ENCODE measurements at regions of chr19 and their contacts with region 1.

Region 1: DNA sequence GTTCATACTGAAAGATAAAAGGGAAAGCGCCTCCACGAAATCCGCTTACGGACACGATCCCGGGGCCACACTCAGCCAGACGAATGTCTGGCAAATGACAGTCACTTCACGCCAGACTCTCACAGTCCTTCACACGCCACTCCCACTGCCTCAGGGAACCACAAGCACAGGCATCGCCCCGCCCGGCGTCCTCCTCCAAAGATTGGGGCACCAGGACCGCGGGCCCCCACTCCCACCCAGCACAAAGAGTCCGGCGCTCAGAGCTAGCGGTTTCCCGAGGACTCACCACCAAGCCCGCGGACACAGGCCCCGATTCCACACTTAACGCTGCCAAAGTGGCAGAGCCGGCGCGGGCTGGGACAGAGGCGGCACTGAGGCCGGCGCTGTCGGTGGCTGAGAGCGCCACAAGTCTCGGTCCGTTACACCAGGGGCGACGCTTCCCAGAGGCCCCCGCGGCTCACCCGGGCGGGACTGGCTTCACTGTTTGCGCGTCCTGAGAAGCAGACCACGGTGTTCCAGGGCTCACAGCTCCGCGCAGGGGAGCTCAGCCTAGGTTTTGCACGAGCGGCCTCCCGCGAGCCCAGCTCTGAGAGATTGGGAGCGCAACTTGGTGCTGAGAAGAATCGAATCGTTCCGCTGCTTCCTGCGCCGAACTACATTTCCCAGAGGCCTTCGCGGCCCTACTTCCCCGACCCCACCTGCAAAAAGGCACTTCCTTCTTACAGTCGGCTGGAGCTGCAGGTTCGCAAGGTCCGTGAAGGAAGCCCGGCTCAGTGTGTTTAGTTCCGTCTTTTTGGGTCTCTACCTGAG is at the start of gene ZNF569:
- DNase-seq: peak; percentile 90 to 93 (median 92)
- ATAC-seq: peak; percentile 82 to 88 (median 85)
- H3K4me3 ChIP-seq: peak within 1 kb of the TSS; percentile 51 to 95 (median 81)
- H3K27ac ChIP-seq: peak within 1 kb of the TSS; percentile 74 to 99 (median 96)
- H3K4me1 ChIP-seq: peaks cover 0 to 32% (median 25%) of the 10 kb centered on the region in 12 donors
- H3K27me3 ChIP-seq: no peaks in the 10 kb centered on the region
- CTCF ChIP-seq: peak in 1 of 12 donors; percentile 25
- POLR2A ChIP-seq: peak in 1 of 2 donors; percentile 46
- total RNA-seq, gene ZNF569: 5.4 to 8.0 (median 6.1) TPM

Region 2: DNA sequence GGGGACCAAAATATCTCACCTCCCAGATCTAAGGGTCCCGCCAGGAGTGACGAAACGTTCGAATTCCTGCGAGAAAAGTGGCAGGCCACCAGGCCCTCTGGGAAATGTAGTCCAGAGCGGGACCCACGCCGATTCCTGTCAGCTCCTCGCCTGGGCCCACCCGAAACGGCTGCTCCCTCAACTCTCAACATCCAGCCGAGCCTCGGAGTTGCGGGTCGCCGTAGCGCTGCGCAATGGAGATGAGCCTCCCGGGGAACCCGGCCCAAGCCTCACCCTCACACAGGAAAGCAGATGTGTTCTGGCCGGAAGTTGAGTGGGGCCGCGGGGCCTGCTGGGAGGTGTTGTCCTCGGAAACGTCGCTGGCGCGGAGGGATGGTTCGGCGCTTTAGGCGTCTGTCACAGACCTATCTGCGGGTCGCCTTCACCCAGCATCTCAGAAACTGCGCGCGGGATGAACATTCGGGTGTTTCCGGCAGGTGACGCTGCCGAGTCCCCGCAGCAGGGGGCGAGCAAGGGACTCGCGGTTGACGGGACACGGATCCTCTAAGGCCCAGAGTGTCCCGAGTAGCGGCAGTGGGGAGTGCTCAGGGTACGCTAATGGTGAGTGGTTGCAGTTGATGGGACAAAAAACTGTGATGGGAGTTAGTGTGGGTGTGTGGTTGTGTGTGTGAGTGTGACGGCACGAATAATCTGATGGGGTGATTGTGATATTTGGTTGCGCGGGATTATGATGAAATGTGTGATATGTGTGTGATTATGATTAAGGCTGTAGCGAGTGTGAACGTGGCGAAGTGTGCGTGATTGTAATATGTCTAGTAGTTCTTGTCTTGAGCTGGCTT is 550.8 kb before region 1 on chr19 and contains the starts of genes ZNF568 and ZNF829:
- intact Hi-C with region 1: loop called in 1 of 10 experiments (anchors 5 kb)
- DNase-seq: peak; percentile 91 to 95 (median 93)
- ATAC-seq: peak; percentile 94 to 99 (median 98)
- H3K4me3 ChIP-seq: peak within 1 kb of the TSS; percentile 60 to 87 (median 80)
- H3K27ac ChIP-seq: peak within 1 kb of the TSS; percentile 80 to 98 (median 97)
- H3K4me1 ChIP-seq: peaks cover 0 to 18% (median 11%) of the 10 kb centered on the region in 12 donors
- H3K27me3 ChIP-seq: no peaks in the 10 kb centered on the region
- CTCF ChIP-seq: peak; percentile 44 to 85 (median 61)
- POLR2A ChIP-seq: no peak
- total RNA-seq, gene ZNF568: 6.6 to 12.1 (median 9.4) TPM
- total RNA-seq, gene ZNF829: 1.3 to 3.5 (median 2.5) TPM

Region 3: DNA sequence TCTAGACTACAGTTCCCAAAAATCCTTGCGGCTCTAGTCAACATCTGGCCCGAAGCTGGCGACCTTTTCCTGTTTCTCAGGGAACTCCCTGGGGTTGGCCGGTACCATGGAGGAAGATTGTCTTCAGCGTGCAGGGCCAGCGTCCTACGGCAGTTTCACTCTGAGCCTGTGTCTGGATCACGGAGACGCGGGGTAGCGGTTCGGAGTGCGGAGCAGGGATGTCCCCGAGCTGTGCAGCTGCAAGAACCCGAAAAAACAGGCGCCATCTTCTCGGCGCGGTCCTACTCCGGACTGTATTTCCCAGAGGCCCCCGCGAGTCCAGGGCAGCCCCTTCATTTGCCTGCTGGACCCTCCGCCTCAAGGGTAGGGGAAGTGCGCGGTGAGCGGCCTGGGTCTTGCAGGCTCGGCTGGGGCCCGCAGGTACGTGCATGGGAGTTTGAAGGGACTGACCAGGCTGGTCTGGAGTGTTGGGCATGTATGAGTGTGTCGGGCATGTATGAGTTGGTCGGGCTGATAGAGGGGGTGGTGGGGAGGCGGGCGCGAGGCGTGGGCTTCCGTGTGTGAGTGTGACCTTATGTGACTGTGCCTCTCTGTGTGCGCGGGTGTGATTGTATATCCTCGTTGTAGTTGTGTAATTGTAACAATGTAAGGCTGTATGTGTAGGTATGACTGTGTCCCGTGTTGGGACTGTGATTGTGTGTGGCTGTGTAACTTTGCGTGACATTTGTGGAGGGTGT is 249.0 kb before region 1 on chr19 and contains the start of gene ZNF383:
- intact Hi-C with region 1: loop called in 2 of 10 experiments (anchors 5 to 10 kb)
- DNase-seq: peak; percentile 87 to 94 (median 91)
- ATAC-seq: peak; percentile 98
- H3K4me3 ChIP-seq: peak within 1 kb of the TSS; percentile 65 to 89 (median 78)
- H3K27ac ChIP-seq: peak within 1 kb of the TSS; percentile 89 to 98 (median 94)
- H3K4me1 ChIP-seq: peaks cover 0 to 26% (median 9%) of the 10 kb centered on the region in 12 donors
- H3K27me3 ChIP-seq: no peaks in the 10 kb centered on the region
- CTCF ChIP-seq: no peak
- POLR2A ChIP-seq: peak in 1 of 2 donors; percentile 28
- total RNA-seq, gene ZNF383: 4.8 to 13.8 (median 9.2) TPM

Region 4: DNA sequence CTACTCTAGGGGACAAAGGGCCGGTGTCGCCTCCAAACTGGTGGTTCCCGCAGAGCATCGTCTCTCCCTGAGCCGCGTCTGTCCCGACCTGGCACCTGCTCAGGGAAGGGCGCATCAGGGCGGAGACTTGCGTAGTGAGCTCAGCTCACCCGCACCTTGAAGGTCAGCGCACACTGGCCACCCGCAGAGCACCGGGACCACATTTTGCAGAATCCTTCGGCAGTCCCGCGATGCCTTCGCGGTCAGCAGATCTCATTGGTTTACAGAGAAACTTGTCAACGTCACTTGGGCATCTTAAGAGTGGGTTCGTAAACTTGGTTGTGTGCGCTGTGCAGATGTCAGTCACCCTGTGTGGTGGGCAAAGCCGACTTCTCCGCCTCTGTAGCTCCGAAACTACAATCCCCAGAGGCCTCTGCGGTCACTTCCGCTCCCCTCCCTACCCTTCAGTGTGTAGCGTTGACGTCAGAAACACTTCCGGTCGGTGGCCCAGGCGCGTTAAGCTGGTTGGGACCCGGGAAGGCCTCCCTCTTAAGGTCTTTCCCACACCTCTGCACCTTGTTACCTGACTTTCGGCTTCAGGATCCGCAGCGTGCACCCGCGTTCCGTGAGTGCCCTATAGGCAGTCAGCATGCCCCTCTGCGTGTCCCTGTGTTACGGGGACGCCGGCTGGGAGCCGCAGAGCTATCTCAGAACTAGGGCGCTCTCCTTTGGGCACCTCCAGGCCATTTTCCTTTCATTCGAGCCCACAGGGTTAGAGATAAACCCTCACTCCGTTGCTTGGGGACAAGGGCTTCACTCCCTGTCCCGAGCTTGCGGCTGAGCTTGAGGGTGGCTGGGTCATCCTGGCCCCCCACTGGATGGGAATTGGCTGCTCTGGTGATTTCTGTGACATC is 132.6 kb before region 1 on chr19:
- intact Hi-C with region 1: loop called in 2 of 10 experiments (anchors 5 to 10 kb)
- DNase-seq: peak; percentile 93 to 96 (median 95)
- ATAC-seq: peak; percentile 98 to 99 (median 99)
- H3K4me3 ChIP-seq: peak overlapping the region; percentile 62 to 99 (median 84)
- H3K27ac ChIP-seq: peak overlapping the region; percentile 19 to 95 (median 87)
- H3K4me1 ChIP-seq: peaks cover 3 to 51% (median 27%) of the 10 kb centered on the region in 12 donors
- H3K27me3 ChIP-seq: no peaks in the 10 kb centered on the region
- CTCF ChIP-seq: no peak
- POLR2A ChIP-seq: peak in 1 of 2 donors; percentile 82

Region 5: GRCh38 chr19:37452500-37453245 is 14.3 kb before region 1 on chr19:
- intact Hi-C with region 1: no loop called
- DNase-seq: no peak
- ATAC-seq: no peak
- H3K4me3 ChIP-seq: no peak overlapping the region
- H3K27ac ChIP-seq: no peak overlapping the region
- H3K4me1 ChIP-seq: no peaks in the 10 kb centered on the region
- H3K27me3 ChIP-seq: no peaks in the 10 kb centered on the region
- CTCF ChIP-seq: no peak
- POLR2A ChIP-seq: no peak

Region 6: GRCh38 chr19:37506387-37507166 is 39.6 kb after region 1 on chr19 and contains the start of gene ZNF793:
- intact Hi-C with region 1: loop called in 7 of 10 experiments (anchors 1 to 5 kb)
- DNase-seq: peak; percentile 84 to 87 (median 86)
- ATAC-seq: peak; percentile 92 to 94 (median 94)
- H3K4me3 ChIP-seq: peak within 1 kb of the TSS; percentile 62 to 87 (median 70)
- H3K27ac ChIP-seq: peak within 1 kb of the TSS; percentile 86 to 98 (median 93)
- H3K4me1 ChIP-seq: peaks cover 0 to 19% (median 5%) of the 10 kb centered on the region in 12 donors
- H3K27me3 ChIP-seq: no peaks in the 10 kb centered on the region
- CTCF ChIP-seq: no peak
- POLR2A ChIP-seq: peak in 1 of 2 donors; percentile 13
- total RNA-seq, gene ZNF793: 2.8 to 7.9 (median 6.2) TPM

Region 7: DNA sequence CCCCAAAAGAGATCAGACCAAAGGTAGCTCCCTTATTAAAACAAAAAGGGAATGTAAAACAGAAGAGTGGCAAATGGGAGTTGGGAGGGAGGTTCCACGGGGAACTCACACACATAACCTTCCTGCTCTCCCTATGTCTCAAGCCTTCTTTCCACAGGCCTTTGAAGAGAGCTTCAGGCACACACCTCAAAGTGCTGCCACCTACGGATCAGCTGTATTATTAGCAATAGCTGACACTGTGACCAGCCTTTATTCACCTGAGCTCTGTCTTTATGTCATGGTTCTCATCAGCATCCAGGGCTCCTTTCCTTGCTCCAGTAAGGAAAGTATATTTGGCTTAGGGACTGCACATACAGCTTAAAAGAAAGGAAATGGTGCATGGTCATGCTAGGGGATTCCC is 116.3 kb after region 1 on chr19:
- intact Hi-C with region 1: no loop called
- DNase-seq: no peak
- ATAC-seq: no peak
- H3K4me3 ChIP-seq: no peak overlapping the region
- H3K27ac ChIP-seq: no peak overlapping the region
- H3K4me1 ChIP-seq: no peaks in the 10 kb centered on the region
- H3K27me3 ChIP-seq: no peaks in the 10 kb centered on the region
- CTCF ChIP-seq: no peak
- POLR2A ChIP-seq: no peak

Region 8: DNA sequence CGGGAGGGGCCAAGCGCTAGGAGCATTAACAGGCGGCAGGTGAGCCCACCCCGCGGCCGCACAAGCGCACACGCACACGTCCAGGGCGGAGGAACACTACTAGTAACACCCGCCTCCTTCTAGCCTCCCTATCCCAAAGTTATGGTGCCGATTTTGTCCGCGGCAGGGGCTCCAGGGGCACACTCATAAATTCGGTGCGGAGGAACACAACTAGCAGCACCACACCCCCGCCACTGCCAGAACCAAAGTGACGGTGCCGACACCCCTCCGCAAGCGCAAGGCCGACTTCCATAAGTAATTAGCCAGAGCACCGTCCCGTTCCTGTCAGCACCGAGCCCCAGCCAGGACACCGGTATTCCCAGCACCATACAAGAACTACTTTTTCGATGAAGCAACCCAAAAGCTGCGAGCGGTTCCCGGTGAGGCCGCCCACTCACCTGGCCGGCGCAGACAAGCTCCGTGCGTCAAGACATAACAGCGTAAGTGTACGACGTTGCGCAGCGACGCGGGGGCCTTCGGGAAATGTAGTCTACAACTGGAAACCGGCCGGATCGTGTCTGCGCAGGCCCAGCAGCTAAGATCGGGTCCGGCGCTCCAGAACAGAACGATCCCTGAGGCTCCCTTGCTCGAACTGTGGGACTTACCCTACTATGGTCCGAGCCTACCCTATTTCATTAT is 127.4 kb after region 1 on chr19 and contains the starts of genes ZNF540 and ZNF571:
- intact Hi-C with region 1: loop called in 1 of 10 experiments (anchors 5 kb)
- DNase-seq: peak; percentile 93 to 96 (median 95)
- ATAC-seq: peak; percentile 99 to 100 (median 99)
- H3K4me3 ChIP-seq: peak within 1 kb of the TSS; percentile 34 to 94 (median 79)
- H3K27ac ChIP-seq: peak within 1 kb of the TSS; percentile 74 to 92 (median 90)
- H3K4me1 ChIP-seq: peaks cover 0 to 24% (median 17%) of the 10 kb centered on the region in 12 donors
- H3K27me3 ChIP-seq: no peaks in the 10 kb centered on the region
- CTCF ChIP-seq: no peak
- POLR2A ChIP-seq: peak; percentile 47 to 76
- total RNA-seq, gene ZNF540: 1.4 to 8.2 (median 5.0) TPM
- total RNA-seq, gene ZNF571: 2.1 to 3.3 (median 2.7) TPM

Region 9: DNA sequence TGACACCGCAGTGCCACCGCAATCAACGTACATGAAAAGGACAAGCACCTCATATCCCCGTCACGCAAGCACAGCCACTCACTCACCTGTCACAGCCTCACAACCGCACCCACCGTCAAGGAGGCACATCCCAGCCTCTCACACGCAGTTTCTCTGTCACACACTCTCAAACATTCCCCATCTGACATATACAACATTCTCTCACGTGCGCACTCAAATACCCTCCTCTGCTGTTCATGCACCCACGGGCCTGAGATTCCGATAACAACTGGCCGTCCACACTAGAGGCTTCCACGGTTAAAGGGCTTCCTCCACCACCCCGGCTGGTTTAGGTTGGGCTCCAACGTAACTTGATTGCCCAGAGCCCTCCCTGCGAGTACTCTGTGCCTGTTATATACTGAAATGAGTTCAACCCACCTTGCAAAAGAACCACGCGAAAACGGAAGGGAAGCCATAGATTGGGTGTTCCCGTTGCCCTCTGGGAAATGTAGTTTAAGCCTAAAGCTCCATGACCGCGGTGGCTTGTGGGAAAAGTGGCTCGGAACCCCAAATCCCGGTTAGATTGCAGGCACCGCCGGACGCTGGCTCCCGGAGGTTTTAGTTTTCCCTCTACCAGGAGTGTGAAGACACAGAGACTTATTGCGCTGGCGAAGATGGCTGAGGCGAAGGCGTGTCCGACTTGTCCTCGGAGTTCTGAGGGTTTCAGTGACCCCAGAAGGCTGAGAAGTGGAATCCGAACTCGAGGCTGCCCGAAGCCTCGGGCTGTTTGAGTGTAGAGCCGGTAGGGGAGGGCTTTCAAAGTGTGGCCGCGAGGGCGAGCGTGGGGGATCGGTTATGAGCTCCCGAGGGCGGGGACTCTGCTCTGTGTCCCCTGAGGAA is 312.4 kb after region 1 on chr19 and contains the start of gene ZNF573:
- intact Hi-C with region 1: loop called in 1 of 10 experiments (anchors 5 kb)
- DNase-seq: peak; percentile 86 to 88 (median 87)
- ATAC-seq: peak; percentile 95 to 99 (median 98)
- H3K4me3 ChIP-seq: peak within 1 kb of the TSS; percentile 53 to 87 (median 78)
- H3K27ac ChIP-seq: peak within 1 kb of the TSS; percentile 48 to 95 (median 90)
- H3K4me1 ChIP-seq: peaks cover 3 to 17% (median 15%) of the 10 kb centered on the region in 12 donors
- H3K27me3 ChIP-seq: no peaks in the 10 kb centered on the region
- CTCF ChIP-seq: peak in 4 of 12 donors; percentile 20 to 42 (median 26)
- POLR2A ChIP-seq: peak in 1 of 2 donors; percentile 69
- total RNA-seq, gene ZNF573: 4.0 to 13.1 (median 8.2) TPM

Region 10: DNA sequence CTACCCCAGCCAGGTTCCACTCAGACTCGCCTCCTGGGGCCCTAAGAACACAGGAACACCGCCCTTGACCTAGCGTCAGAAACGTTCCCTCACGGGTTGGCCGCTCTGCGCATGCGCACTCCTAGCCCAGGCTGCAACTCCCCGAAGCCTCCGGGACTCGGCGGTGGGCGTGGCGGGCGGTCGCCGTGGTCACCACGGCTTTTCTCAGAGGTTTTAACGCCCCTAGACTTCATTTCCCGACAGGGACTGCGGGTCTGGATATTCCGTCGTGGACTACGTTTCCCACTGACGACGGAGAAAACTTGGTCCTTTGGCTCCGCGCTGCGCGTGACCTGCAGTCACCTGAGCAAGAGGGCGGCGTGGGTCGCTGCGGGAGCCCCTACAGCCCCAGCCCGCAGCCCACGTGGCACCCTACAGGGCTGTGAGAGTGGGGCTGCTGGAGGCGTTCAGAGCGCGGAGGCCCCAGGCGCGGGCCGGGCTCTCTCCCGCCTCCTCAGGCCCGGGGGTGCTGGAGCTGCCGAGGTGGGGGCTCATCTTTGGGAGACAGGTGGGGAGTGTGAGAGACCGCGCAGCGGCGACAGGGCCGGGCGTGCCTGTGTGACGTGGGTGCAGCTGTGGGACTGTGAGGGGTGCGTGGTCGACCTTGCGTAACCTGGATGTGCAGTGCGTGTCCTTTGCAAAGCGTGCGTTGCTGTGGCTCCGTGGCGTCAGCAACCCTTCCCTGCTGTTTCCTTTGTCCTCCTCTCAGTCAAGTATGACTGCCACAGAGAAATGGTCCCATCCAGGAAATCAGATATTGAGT is 350.4 kb after region 1 on chr19:
- intact Hi-C with region 1: no loop called
- DNase-seq: peak; percentile 86 to 93 (median 92)
- ATAC-seq: peak; percentile 90 to 97 (median 96)
- H3K4me3 ChIP-seq: peak overlapping the region; percentile 58 to 85 (median 76)
- H3K27ac ChIP-seq: peak overlapping the region in 10 of 12 donors; percentile 20 to 69 (median 50)
- H3K4me1 ChIP-seq: peaks cover 0 to 17% (median 5%) of the 10 kb centered on the region in 12 donors
- H3K27me3 ChIP-seq: no peaks in the 10 kb centered on the region
- CTCF ChIP-seq: no peak
- POLR2A ChIP-seq: peak in 1 of 2 donors; percentile 13